ENCODE measurements at regions of chr1 and their contacts with region 1.

Region 1: GRCh38 chr1:178282949-178283367 is 189.1 kb downstream of the RASAL2 start:
- DNase-seq: no peak
- H3K4me3 ChIP-seq: peak overlapping the region in 1 of 4 experiments; percentile 53; a peak in 2 of 8 replicates
- H3K27ac ChIP-seq: peak overlapping the region; percentile 58
- H3K4me1 ChIP-seq: peaks cover 9 to 23% (median 12%) of the 10 kb centered on the region in 4 experiments; a peak in 6 of 7 replicates
- H3K27me3 ChIP-seq: no peaks in the 10 kb centered on the region
- CTCF ChIP-seq: peak in 2 of 3 experiments; percentile 35 to 41; a peak in 2 of 4 replicates
- EP300 ChIP-seq: no peak
- POLR2A ChIP-seq: no peak
- RAD21 ChIP-seq: peak; percentile 54 to 56

Region 2: GRCh38 chr1:178267646-178268094 is 15.3 kb before region 1 on chr1:
- CTCF ChIA-PET with region 1: interaction called, 13 read pairs
- POLR2A ChIA-PET with region 1: interaction called, 9 read pairs
- DNase-seq: peak in 1 of 2 experiments; percentile 51
- H3K4me3 ChIP-seq: peak overlapping the region in 1 of 4 experiments; percentile 54; a peak in 4 of 8 replicates
- H3K27ac ChIP-seq: peak overlapping the region; percentile 50
- H3K4me1 ChIP-seq: peaks cover 6 to 36% (median 21%) of the 10 kb centered on the region in 4 experiments; a peak in 6 of 7 replicates
- H3K27me3 ChIP-seq: no peaks in the 10 kb centered on the region
- CTCF ChIP-seq: no peak
- EP300 ChIP-seq: no peak
- POLR2A ChIP-seq: no peak
- RAD21 ChIP-seq: no peak; a peak in 1 of 4 replicates

Region 3: DNA sequence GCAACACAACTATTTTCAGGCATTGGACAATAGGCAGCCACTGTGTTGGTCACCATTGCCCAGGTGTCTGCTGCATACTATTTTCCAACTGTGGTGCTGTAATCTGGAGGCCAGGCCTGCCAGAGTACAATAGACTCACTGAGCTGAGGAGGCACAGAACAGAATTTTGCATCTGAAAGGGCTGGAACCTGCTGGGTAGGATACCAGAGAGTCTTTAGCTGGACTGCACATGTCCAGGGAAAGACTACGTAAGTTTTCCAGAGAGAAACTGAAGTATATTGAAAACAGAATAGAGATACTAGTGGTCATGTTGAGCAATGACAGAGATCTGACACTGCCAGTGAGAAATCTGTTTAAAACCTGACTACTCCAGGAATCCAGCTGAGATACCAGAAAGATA is 11.7 kb after region 1 on chr1:
- CTCF ChIA-PET with region 1: interaction called, 13 read pairs
- POLR2A ChIA-PET with region 1: interaction called, 4 read pairs
- DNase-seq: no peak
- H3K4me3 ChIP-seq: no peak overlapping the region
- H3K27ac ChIP-seq: no peak overlapping the region
- H3K4me1 ChIP-seq: peaks cover 3 to 8% (median 4%) of the 10 kb centered on the region in 4 experiments; a peak in 6 of 7 replicates
- H3K27me3 ChIP-seq: no peaks in the 10 kb centered on the region
- CTCF ChIP-seq: no peak; a peak in 1 of 4 replicates
- EP300 ChIP-seq: no peak
- POLR2A ChIP-seq: no peak
- RAD21 ChIP-seq: no peak

Measured in H1 (cell line).